Heart right ventricle (tissue), 16 donors: ENCODE measurements at regions of chr9 and their contacts with region 1.

Region 1: DNA sequence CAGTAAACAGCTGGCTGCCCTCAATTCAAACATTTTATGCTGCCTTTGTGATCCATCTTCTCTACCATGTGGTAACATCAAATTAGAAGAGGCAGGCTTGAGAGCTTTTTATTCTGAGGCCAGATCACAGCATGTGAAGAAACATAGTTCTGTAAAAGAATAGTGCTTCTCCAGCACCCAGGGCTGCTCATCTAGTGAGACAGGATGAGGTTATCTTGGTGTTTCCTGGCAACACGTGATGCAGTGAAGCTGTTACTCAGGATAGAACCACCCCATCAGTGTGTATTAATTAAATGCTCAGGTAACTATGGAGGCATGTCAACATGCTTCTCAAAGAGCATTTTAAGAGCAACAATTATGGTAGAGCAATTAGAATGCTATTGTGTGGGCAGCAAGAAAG is 400.5 kb upstream of the ACO1 start:
- DNase-seq: no peak
- ATAC-seq: no peak
- H3K4me3 ChIP-seq: no peak overlapping the region
- H3K27ac ChIP-seq: no peak overlapping the region
- H3K4me1 ChIP-seq: no peaks in the 10 kb centered on the region
- H3K27me3 ChIP-seq: no peaks in the 10 kb centered on the region
- CTCF ChIP-seq: no peak

Region 2: DNA sequence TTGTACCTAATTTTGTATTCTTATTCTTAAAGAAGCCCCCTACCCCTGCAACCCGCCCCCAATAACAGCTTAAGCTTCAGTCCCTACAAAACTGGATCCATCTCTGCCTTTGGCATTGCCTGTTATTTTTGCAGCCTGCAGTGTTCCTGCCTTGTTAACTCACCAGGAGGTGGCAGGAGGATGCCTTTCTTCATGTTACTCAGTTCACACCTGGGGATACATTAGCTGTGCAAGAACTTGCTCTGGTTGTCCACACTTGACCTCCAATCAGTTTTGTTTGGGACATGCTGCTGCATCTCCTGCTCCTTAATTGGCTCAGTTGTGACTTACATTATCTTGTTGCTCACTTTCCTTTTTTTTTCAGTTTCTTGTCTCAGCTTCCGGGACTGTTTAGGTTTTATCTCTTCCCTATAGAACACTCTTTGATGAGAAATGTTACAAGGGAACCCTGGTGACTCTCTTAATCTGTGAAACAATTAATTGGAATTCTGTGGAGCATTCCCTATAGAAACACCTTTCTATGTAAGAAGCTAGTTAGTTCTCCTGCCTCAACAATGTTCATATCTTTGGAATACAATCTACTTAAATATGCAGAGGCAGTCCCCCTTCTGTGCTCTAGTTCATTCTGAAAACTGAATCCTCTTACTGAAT is 67.2 kb before region 1 on chr9:
- intact Hi-C with region 1: loop called in 1 of 10 experiments (anchors 10 kb)
- DNase-seq: no peak
- ATAC-seq: no peak
- H3K4me3 ChIP-seq: no peak overlapping the region
- H3K27ac ChIP-seq: no peak overlapping the region
- H3K4me1 ChIP-seq: no peaks in the 10 kb centered on the region
- H3K27me3 ChIP-seq: no peaks in the 10 kb centered on the region
- CTCF ChIP-seq: no peak

Region 3: GRCh38 chr9:32004431-32005076 is 20.7 kb after region 1 on chr9:
- intact Hi-C with region 1: no loop called
- DNase-seq: no peak
- ATAC-seq: no peak
- H3K4me3 ChIP-seq: no peak overlapping the region
- H3K27ac ChIP-seq: no peak overlapping the region
- H3K4me1 ChIP-seq: no peaks in the 10 kb centered on the region
- H3K27me3 ChIP-seq: no peaks in the 10 kb centered on the region
- CTCF ChIP-seq: no peak